ENCODE measurements at regions of chr13 and their contacts with region 1.

Region 1: GRCh38 chr13:71685072-71685471 is 181.9 kb downstream of the DACH1 start:
- DNase-seq: no peak
- H3K4me3 ChIP-seq: no peak overlapping the region
- H3K27ac ChIP-seq: no peak overlapping the region
- H3K4me1 ChIP-seq: no peaks in the 10 kb centered on the region
- H3K27me3 ChIP-seq: no peaks in the 10 kb centered on the region
- CTCF ChIP-seq: no peak

Region 2: GRCh38 chr13:71768881-71769280 is 83.8 kb after region 1 on chr13:
- CTCF ChIA-PET with region 1: no interaction called
- dilution Hi-C with region 1: loop called (anchors 5 kb)
- in situ Hi-C with region 1: no loop called
- intact Hi-C with region 1: no loop called
- DNase-seq: no peak
- H3K4me3 ChIP-seq: no peak overlapping the region
- H3K27ac ChIP-seq: no peak overlapping the region
- H3K4me1 ChIP-seq: no peaks in the 10 kb centered on the region
- H3K27me3 ChIP-seq: no peaks in the 10 kb centered on the region
- CTCF ChIP-seq: no peak

Region 3: GRCh38 chr13:72004784-72005374 is 319.8 kb after region 1 on chr13:
- CTCF ChIA-PET with region 1: no interaction called
- dilution Hi-C with region 1: no loop called
- in situ Hi-C with region 1: no loop called
- intact Hi-C with region 1: no loop called
- DNase-seq: no peak
- H3K4me3 ChIP-seq: no peak overlapping the region
- H3K27ac ChIP-seq: no peak overlapping the region
- H3K4me1 ChIP-seq: no peaks in the 10 kb centered on the region
- H3K27me3 ChIP-seq: no peaks in the 10 kb centered on the region
- CTCF ChIP-seq: no peak

Measured in mammary epithelial cell (primary cell).